Esophagus squamous epithelium (tissue), 5 donors: ENCODE measurements at regions of chr14 and their contacts with region 1.

Region 1: DNA sequence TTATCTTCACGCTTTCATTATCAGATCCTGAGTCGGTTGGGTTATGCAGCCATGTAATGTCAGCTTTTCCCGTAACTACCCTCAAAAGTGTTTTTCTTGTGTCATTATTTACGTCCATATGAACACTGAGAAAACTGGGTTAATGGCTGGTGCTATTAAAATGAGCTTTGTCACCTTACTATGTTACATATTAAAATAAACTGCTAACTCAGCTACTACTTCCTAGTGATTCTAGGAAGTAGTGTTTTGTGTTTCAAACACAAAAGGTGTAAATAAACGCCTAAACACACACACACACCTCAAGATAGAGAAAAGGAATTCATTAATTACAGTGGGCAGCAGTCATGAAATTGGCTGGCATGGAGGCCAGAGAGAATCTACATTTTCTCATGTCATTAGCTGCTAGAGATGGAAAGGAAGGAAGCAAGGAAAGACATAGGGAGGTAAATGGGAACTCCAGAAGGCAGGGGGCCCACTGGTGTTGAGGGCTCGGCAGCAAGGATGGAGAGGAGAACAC is 730 bp upstream of the PRMT5 start:
- DNase-seq: no peak
- H3K4me3 ChIP-seq: peak overlapping the region; percentile 24 to 97 (median 90)
- H3K27ac ChIP-seq: peak overlapping the region; percentile 82 to 97 (median 92)
- H3K4me1 ChIP-seq: peaks cover 20 to 51% (median 22%) of the 10 kb centered on the region in 3 donors
- H3K27me3 ChIP-seq: no peaks in the 10 kb centered on the region
- CTCF ChIP-seq: no peak
- POLR2A ChIP-seq: no peak

Region 2: GRCh38 chr14:22780105-22780679 is 149.7 kb before region 1 on chr14:
- intact Hi-C with region 1: no loop called
- DNase-seq: no peak
- H3K4me3 ChIP-seq: no peak overlapping the region
- H3K27ac ChIP-seq: no peak overlapping the region
- H3K4me1 ChIP-seq: no peaks in the 10 kb centered on the region
- H3K27me3 ChIP-seq: no peaks in the 10 kb centered on the region
- CTCF ChIP-seq: no peak
- POLR2A ChIP-seq: no peak

Region 3: DNA sequence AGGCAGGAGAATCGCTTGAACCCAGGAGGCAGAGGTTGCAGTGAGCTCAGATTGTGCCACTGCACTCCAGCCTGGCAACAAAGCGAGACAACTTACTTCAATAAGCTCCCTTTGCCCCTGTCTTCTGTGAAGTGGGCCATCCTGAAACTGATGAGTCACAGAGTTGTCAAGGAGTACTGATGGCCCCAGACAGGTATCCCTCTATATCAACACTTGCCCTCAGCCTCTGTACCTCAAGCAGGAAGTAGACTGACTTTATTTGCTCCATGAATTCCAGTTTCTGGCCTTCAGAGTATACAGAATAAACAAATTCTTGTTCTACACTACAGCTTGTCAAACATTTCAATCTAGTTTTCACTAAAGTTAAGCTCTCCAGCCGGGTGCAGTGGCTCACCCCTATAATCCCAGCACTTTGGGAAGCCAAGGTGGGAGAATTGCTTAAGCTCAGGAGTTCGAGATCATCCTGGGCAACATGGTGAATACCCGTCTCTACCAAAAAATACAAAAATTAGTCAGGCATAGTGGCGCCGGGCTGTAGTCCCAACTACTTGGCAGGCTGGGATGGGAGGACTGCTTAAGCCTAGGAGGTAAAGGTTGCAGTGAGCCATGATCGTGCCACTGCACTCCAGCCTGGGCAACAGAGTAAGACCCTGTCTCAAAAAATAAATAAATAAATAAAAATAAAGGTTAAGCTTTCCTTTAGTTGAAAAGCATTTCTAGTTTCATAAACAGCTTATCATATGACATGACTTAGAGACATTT is 74.8 kb before region 1 on chr14:
- intact Hi-C with region 1: no loop called
- DNase-seq: no peak
- H3K4me3 ChIP-seq: no peak overlapping the region
- H3K27ac ChIP-seq: no peak overlapping the region
- H3K4me1 ChIP-seq: peaks cover 16 to 36% (median 24%) of the 10 kb centered on the region in 3 donors
- H3K27me3 ChIP-seq: no peaks in the 10 kb centered on the region
- CTCF ChIP-seq: no peak
- POLR2A ChIP-seq: no peak

Region 4: GRCh38 chr14:22977684-22978486 is 48.0 kb after region 1 on chr14:
- intact Hi-C with region 1: loop called (anchors 5 kb)
- DNase-seq: no peak
- H3K4me3 ChIP-seq: peak overlapping the region in 2 of 4 donors; percentile 4 to 90
- H3K27ac ChIP-seq: peak overlapping the region; percentile 90 to 95 (median 94)
- H3K4me1 ChIP-seq: peaks cover 23 to 91% (median 27%) of the 10 kb centered on the region in 3 donors
- H3K27me3 ChIP-seq: peaks cover 0 to 18% (median 0%) of the 10 kb centered on the region in 4 donors
- CTCF ChIP-seq: no peak
- POLR2A ChIP-seq: no peak